Caco-2 (cell line): ENCODE measurements at regions of chrX and their contacts with region 1.

Region 1: DNA sequence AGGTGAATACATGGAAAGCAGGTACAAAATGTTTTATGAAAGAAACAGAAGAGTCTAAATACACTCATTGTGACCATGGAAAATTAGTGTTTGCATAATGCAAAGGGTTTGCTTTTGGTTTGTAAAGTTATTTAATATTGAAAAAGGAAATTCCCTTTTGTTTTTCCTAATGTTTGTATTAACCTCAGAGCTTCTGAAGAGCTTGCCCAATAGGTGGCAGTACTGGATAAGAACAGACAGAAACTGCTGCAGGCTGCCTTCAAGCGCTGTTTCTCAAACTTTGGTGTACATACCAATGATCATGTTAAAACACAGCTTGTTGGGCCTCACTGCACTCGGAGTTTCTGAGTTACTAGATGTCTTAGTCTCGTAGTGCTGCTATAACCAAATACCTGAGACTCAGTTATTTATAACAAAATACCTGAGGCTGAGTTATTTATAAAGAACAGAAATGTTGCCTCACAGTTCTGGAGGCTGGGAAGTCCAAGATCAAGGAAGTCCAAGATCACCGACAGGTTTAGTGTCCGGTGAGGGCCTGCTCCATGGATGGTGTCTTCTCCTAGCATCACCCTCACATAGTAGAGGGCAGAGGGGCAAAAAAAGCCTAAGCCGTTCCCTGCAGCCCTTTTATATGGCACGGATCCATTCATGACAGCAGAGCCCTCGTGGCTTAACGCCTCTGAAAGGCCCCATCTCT is 54.2 kb downstream of the SUPT20HL2 start:
- DNase-seq: peak; percentile 29 to 41
- H3K4me3 ChIP-seq: no peak overlapping the region
- H3K4me3 Mint-ChIP-seq: no peak overlapping the region
- H3K27ac Mint-ChIP-seq: no peak overlapping the region
- H3K4me1 ChIP-seq: no peaks in the 10 kb centered on the region
- H3K4me1 Mint-ChIP-seq: peaks cover 6% of the 10 kb centered on the region
- H3K27me3 ChIP-seq: no peaks in the 10 kb centered on the region
- H3K27me3 Mint-ChIP-seq: no peaks in the 10 kb centered on the region
- CTCF ChIP-seq: peak; percentile 14 to 56

Region 2: DNA sequence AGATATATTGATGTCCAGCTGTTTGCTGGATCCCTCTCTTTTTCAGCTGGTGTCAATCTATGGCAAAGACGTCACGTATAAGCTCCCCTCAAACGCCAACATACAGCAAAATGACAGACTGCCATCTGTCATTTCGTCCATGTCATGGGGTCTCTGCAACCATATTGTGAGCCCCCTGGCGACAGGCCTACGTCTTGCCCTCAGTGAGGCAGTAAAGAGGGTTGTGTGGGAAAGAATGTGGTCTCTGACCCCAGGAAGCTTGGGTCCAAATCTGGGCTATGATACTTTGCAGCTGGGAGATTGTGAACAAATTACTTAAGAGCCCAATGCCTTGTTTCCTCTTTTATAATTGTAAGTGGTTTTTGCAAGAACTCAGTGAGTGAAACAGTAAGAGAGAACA is 46.7 kb after region 1 on chrX:
- CTCF ChIA-PET with region 1: no interaction called
- POLR2A ChIA-PET with region 1: no interaction called
- intact Hi-C with region 1: loop called (anchors 1 kb)
- DNase-seq: peak in 1 of 2 experiments; percentile 10
- H3K4me3 ChIP-seq: no peak overlapping the region
- H3K4me3 Mint-ChIP-seq: no peak overlapping the region
- H3K27ac Mint-ChIP-seq: no peak overlapping the region
- H3K4me1 ChIP-seq: no peaks in the 10 kb centered on the region
- H3K4me1 Mint-ChIP-seq: no peaks in the 10 kb centered on the region
- H3K27me3 ChIP-seq: no peaks in the 10 kb centered on the region
- H3K27me3 Mint-ChIP-seq: no peaks in the 10 kb centered on the region
- CTCF ChIP-seq: no peak

Region 3: DNA sequence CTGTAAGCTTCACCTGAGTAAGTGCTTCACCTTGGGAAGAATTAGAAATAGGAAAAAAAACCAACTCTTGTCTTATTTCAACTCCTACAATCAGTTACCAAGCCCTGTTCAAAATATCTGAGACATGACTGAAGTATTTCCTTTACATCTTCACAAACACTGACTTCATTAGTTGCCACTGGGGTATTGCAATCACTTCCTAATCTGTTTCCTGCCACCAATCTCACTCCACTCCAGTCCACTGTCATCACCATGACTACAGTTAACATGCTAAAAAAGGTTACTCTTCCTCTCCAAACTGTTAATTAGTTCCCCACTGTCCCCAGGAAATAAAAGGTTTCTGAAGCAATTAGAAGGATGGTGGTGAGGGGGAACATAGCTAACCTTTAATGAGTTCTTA is 97.4 kb after region 1 on chrX:
- CTCF ChIA-PET with region 1: no interaction called
- POLR2A ChIA-PET with region 1: no interaction called
- intact Hi-C with region 1: no loop called
- DNase-seq: no peak
- H3K4me3 ChIP-seq: no peak overlapping the region
- H3K4me3 Mint-ChIP-seq: no peak overlapping the region
- H3K27ac Mint-ChIP-seq: no peak overlapping the region
- H3K4me1 ChIP-seq: no peaks in the 10 kb centered on the region
- H3K4me1 Mint-ChIP-seq: no peaks in the 10 kb centered on the region
- H3K27me3 ChIP-seq: no peaks in the 10 kb centered on the region
- H3K27me3 Mint-ChIP-seq: peaks cover 3% of the 10 kb centered on the region
- CTCF ChIP-seq: no peak

Region 4: GRCh38 chrX:24395775-24396174 is 136.1 kb after region 1 on chrX:
- CTCF ChIA-PET with region 1: interaction called, 3 read pairs
- POLR2A ChIA-PET with region 1: no interaction called
- intact Hi-C with region 1: loop called (anchors 10 kb)
- DNase-seq: peak in 1 of 2 experiments; percentile 62
- H3K4me3 ChIP-seq: no peak overlapping the region
- H3K4me3 Mint-ChIP-seq: no peak overlapping the region
- H3K27ac Mint-ChIP-seq: no peak overlapping the region
- H3K4me1 ChIP-seq: no peaks in the 10 kb centered on the region
- H3K4me1 Mint-ChIP-seq: no peaks in the 10 kb centered on the region
- H3K27me3 ChIP-seq: no peaks in the 10 kb centered on the region
- H3K27me3 Mint-ChIP-seq: peaks cover 8% of the 10 kb centered on the region
- CTCF ChIP-seq: peak; percentile 35 to 57

Region 5: GRCh38 chrX:24498975-24499374 is 239.3 kb after region 1 on chrX:
- CTCF ChIA-PET with region 1: no interaction called
- POLR2A ChIA-PET with region 1: no interaction called
- intact Hi-C with region 1: loop called (anchors 1 kb)
- DNase-seq: no peak
- H3K4me3 ChIP-seq: no peak overlapping the region
- H3K4me3 Mint-ChIP-seq: no peak overlapping the region
- H3K27ac Mint-ChIP-seq: no peak overlapping the region
- H3K4me1 ChIP-seq: no peaks in the 10 kb centered on the region
- H3K4me1 Mint-ChIP-seq: no peaks in the 10 kb centered on the region
- H3K27me3 ChIP-seq: no peaks in the 10 kb centered on the region
- H3K27me3 Mint-ChIP-seq: no peaks in the 10 kb centered on the region
- CTCF ChIP-seq: peak; percentile 14 to 34